Ascending aorta (tissue), 2 donors: ENCODE measurements at regions of chr14 and their contacts with region 1.

Region 1: GRCh38 chr14:23301288-23301968 is 1.2 kb downstream of the PPP1R3E start:
- DNase-seq: peak; percentile 94 to 99
- H3K4me3 ChIP-seq: peak overlapping the region; percentile 85 to 93
- H3K27ac ChIP-seq: peak overlapping the region; percentile 98 to 99
- H3K4me1 ChIP-seq: peaks cover 15 to 17% of the 10 kb centered on the region in 2 donors
- H3K27me3 ChIP-seq: no peaks in the 10 kb centered on the region
- CTCF ChIP-seq: peak; percentile 56 to 87 (median 66)

Region 2: DNA sequence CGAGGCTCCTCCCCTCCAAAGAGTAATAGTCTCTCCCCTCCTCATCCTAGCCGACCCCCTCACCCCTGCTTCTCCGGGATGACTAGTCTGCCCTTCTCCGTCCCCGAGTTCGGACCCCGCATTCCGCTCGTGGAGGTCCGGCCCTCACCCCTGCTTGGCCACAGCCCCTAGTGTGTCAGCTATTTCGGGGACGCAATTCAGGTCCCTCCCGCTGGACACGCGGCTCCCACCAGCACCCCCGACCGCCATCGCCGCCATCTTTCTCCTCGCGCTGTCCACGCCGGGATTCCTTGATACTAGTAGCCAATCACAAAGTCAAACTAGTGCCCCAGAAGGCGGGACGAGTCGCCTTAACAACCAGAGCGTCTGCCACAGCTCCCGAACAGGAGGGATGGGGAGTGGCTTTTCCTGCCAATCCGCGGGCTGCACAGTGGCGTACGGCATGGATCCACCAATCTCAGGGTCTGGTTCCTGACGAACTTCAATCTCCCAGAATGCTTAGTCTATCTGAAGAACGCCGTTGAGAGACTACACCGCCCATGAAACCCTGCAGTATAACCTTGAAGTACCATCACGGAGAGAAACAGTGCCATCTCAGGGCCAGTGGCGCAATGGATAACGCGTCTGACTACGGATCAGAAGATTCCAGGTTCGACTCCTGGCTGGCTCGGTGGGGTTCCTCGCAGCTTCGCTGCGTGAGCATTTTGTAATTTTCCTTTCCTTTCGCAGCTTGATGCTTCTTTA is 372.2 kb before region 1 on chr14 and contains the start of gene PRMT5:
- intact Hi-C with region 1: loop called (anchors 10 kb)
- DNase-seq: peak; percentile 99 to 100
- H3K4me3 ChIP-seq: peak within 1 kb of the TSS; percentile 85 to 87
- H3K27ac ChIP-seq: peak within 1 kb of the TSS; percentile 87 to 91
- H3K4me1 ChIP-seq: peaks cover 0 to 14% of the 10 kb centered on the region in 2 donors
- H3K27me3 ChIP-seq: no peaks in the 10 kb centered on the region
- CTCF ChIP-seq: no peak
- total RNA-seq, gene PRMT5: 118 TPM

Region 3: DNA sequence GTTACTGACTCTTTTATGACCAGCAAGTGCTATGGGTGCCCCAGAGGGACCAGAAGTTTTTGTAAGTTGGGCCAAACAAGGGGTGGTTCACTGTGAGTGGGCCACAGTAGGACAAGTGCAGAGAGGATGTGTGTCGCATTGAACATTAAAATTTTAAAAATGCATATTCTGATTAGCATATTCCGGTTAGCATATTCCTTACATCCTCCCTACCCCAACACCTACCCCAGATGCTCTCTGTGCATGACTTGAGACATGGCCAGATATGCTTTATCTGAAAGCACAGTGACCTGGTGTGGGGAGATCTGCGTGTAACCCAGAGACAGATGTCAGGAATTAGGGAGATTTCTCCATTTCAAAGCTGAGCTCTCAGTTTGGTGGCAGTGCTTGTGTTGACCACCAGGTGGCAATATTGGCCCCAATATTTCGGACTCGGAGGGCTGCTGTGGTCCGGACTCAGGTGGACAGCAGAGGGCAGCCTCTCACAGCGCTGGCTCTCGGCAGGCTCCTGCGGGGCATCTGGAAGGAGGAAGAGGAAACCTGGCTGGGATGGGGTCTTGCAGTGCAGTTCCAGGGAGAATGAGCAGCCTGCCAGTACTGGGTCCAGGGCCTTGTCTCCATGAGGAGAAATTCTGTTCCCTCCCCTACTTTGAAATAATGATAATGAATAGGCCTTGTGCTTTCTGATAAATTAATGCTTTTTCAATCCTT is 180.7 kb before region 1 on chr14:
- intact Hi-C with region 1: loop called (anchors 5 kb)
- DNase-seq: peak; percentile 69 to 95
- H3K4me3 ChIP-seq: peak overlapping the region in 1 of 2 donors; percentile 8
- H3K27ac ChIP-seq: peak overlapping the region; percentile 53 to 63
- H3K4me1 ChIP-seq: peaks cover 6 to 24% of the 10 kb centered on the region in 2 donors
- H3K27me3 ChIP-seq: no peaks in the 10 kb centered on the region
- CTCF ChIP-seq: peak; percentile 99 to 100 (median 100)

Region 4: GRCh38 chr14:23259426-23259825 is 42.0 kb before region 1 on chr14:
- intact Hi-C with region 1: loop called (anchors 2 kb)
- DNase-seq: no peak
- H3K4me3 ChIP-seq: no peak overlapping the region
- H3K27ac ChIP-seq: no peak overlapping the region
- H3K4me1 ChIP-seq: no peaks in the 10 kb centered on the region
- H3K27me3 ChIP-seq: no peaks in the 10 kb centered on the region
- CTCF ChIP-seq: no peak

Region 5: DNA sequence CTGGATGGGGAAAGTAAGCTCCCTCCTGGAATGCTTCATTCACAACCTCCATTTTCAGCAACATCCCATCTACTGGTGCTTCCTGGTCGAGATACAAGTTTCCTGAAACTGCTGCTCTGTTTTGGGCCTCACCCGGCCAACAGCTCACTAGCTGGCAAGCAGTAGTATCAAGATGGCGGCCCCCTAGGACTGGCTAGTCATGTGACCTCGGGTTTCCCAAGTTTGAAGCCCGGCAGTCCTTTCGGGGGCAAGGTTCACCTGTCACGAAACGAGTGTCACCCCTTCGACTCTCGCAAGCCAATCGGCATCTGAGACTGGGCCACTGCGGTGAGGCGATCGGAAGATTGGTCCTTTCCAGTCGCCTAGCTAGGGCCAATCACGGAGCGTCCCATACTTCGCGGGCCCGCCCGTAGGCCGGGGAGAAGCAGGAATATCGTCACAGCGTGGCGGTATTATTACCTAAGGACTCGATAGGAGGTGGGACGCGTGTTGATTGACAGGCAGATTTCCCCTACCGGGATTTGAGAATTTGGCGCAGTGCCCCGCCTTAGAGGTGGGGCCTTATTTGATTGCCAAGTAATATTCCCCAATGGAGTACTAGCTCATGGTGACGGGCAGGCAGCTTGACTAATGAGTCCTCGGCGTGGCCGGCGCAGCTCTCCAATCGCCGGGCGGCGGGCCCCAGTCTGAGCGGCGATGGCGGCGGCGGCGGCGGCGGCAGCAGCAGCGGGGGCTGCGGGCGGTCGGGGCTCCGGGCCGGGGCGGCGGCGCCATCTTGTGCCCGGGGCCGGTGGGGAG is 19.5 kb after region 1 on chr14 and contains the start of gene PABPN1:
- intact Hi-C with region 1: loop called (anchors 1 kb)
- DNase-seq: peak; percentile 98 to 100
- H3K4me3 ChIP-seq: peak within 1 kb of the TSS; percentile 98 to 99
- H3K27ac ChIP-seq: peak within 1 kb of the TSS; percentile 98 to 99
- H3K4me1 ChIP-seq: peaks cover 5 to 16% of the 10 kb centered on the region in 2 donors
- H3K27me3 ChIP-seq: no peaks in the 10 kb centered on the region
- CTCF ChIP-seq: no peak
- total RNA-seq, gene PABPN1: 90.6 TPM

Region 6: GRCh38 chr14:24141097-24141880 is 839.9 kb after region 1 on chr14 and contains the start of gene EMC9:
- intact Hi-C with region 1: loop called (anchors 10 kb)
- DNase-seq: peak; percentile 100
- H3K4me3 ChIP-seq: peak within 1 kb of the TSS; percentile 80 to 81
- H3K27ac ChIP-seq: peak within 1 kb of the TSS; percentile 76 to 89
- H3K4me1 ChIP-seq: peaks cover 18 to 39% of the 10 kb centered on the region in 2 donors
- H3K27me3 ChIP-seq: no peaks in the 10 kb centered on the region
- CTCF ChIP-seq: peak; percentile 22 to 74 (median 45)
- total RNA-seq, gene EMC9: 3.4 TPM